ENCODE measurements at regions of chr5 and their contacts with region 1.

Region 1: GRCh38 chr5:63401436-63402046 is 560.7 kb downstream of the HTR1A start:
- DNase-seq: peak; percentile 57
- H3K4me3 ChIP-seq: no peak overlapping the region
- H3K27ac ChIP-seq: no peak overlapping the region
- H3K4me1 ChIP-seq: no peaks in the 10 kb centered on the region
- H3K27me3 ChIP-seq: no peaks in the 10 kb centered on the region
- CTCF ChIP-seq: peak; percentile 62

Region 2: GRCh38 chr5:63959177-63959982 is 557.8 kb after region 1 on chr5:
- intact Hi-C with region 1: loop called (anchors 5 kb)
- DNase-seq: no peak
- H3K4me3 ChIP-seq: no peak overlapping the region
- H3K27ac ChIP-seq: no peak overlapping the region
- H3K4me1 ChIP-seq: no peaks in the 10 kb centered on the region
- H3K27me3 ChIP-seq: peaks cover 15% of the 10 kb centered on the region
- CTCF ChIP-seq: no peak

Measured in colonic mucosa (tissue), 4 donors.